ENCODE measurements at regions of chr2 and their contacts with region 1.

Region 1: GRCh38 chr2:159118115-159118858 is 149.8 kb downstream of the TANC1 start:
- DNase-seq: peak; percentile 91
- ATAC-seq: peak; percentile 94
- H3K4me3 Mint-ChIP-seq: no peak overlapping the region
- H3K27ac Mint-ChIP-seq: no peak overlapping the region
- H3K4me1 Mint-ChIP-seq: peaks cover 4% of the 10 kb centered on the region
- H3K27me3 Mint-ChIP-seq: no peaks in the 10 kb centered on the region
- CTCF ChIP-seq: peak; percentile 76

Region 2: GRCh38 chr2:158903711-158904443 is 214.4 kb before region 1 on chr2:
- CTCF ChIA-PET with region 1: interaction called, 69 read pairs
- POLR2A ChIA-PET with region 1: interaction called, 3 read pairs
- intact Hi-C with region 1: loop called (anchors 1 kb)
- DNase-seq: no peak
- ATAC-seq: no peak
- H3K4me3 Mint-ChIP-seq: no peak overlapping the region
- H3K27ac Mint-ChIP-seq: no peak overlapping the region
- H3K4me1 Mint-ChIP-seq: no peaks in the 10 kb centered on the region
- H3K27me3 Mint-ChIP-seq: no peaks in the 10 kb centered on the region
- CTCF ChIP-seq: no peak

Region 3: GRCh38 chr2:159053161-159054031 is 64.9 kb before region 1 on chr2:
- CTCF ChIA-PET with region 1: interaction called, 13 read pairs
- POLR2A ChIA-PET with region 1: no interaction called
- intact Hi-C with region 1: no loop called
- DNase-seq: no peak
- ATAC-seq: no peak
- H3K4me3 Mint-ChIP-seq: no peak overlapping the region
- H3K27ac Mint-ChIP-seq: no peak overlapping the region
- H3K4me1 Mint-ChIP-seq: no peaks in the 10 kb centered on the region
- H3K27me3 Mint-ChIP-seq: no peaks in the 10 kb centered on the region
- CTCF ChIP-seq: no peak

Region 4: DNA sequence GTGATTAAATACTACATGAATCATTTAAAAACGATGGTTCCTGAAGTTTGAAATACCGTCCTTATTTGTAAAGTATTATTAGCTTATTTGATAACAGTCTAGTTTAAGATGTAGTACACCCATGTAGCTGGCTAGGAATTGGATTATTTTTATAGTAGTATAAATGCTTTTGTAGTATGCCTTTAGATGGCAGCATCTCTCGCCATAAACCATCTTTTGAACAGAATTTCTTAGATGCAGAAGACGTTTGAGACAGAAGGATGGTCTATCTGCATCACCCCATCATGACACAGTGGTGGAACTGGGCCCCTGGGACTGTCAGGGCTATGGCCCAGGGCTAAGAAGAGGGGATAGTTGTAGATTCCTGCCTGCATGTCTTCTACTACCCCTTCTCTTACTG is 15.5 kb after region 1 on chr2:
- CTCF ChIA-PET with region 1: interaction called, 34 read pairs
- POLR2A ChIA-PET with region 1: no interaction called
- intact Hi-C with region 1: no loop called
- DNase-seq: no peak
- ATAC-seq: peak; percentile 37
- H3K4me3 Mint-ChIP-seq: no peak overlapping the region
- H3K27ac Mint-ChIP-seq: no peak overlapping the region
- H3K4me1 Mint-ChIP-seq: no peaks in the 10 kb centered on the region
- H3K27me3 Mint-ChIP-seq: no peaks in the 10 kb centered on the region
- CTCF ChIP-seq: no peak